ENCODE measurements at regions of chr5 and their contacts with region 1.

Region 1: GRCh38 chr5:143386725-143387124 is 16.8 kb downstream of the NR3C1 start:
- DNase-seq: peak; percentile 70
- ATAC-seq: no peak
- H3K4me3 ChIP-seq: no peak overlapping the region
- H3K27ac ChIP-seq: no peak overlapping the region
- H3K4me1 ChIP-seq: peaks cover 7% of the 10 kb centered on the region
- H3K27me3 ChIP-seq: no peaks in the 10 kb centered on the region
- CTCF ChIP-seq: no peak
- POLR2A ChIP-seq: no peak
- RAD21 ChIP-seq: no peak

Region 2: GRCh38 chr5:143364061-143364460 is 22.7 kb before region 1 on chr5:
- CTCF ChIA-PET with region 1: no interaction called
- POLR2A ChIA-PET with region 1: no interaction called
- dilution Hi-C with region 1: no loop called
- in situ Hi-C with region 1: no loop called
- intact Hi-C with region 1: loop called (anchors 2 kb)
- DNase-seq: no peak
- ATAC-seq: no peak
- H3K4me3 ChIP-seq: no peak overlapping the region
- H3K27ac ChIP-seq: no peak overlapping the region
- H3K4me1 ChIP-seq: peaks cover 6% of the 10 kb centered on the region; the same call in 1 of the 2 replicates
- H3K27me3 ChIP-seq: no peaks in the 10 kb centered on the region
- CTCF ChIP-seq: no peak
- POLR2A ChIP-seq: no peak
- RAD21 ChIP-seq: no peak